PC-9 (cell line): ENCODE measurements at regions of chr22 and their contacts with region 1.

Region 1: GRCh38 chr22:32474635-32475467 is at the start of gene FBXO7:
- DNase-seq: peak; percentile 71 to 90
- H3K4me3 ChIP-seq: peak within 1 kb of the TSS; percentile 77
- H3K27ac ChIP-seq: peak within 1 kb of the TSS; percentile 81
- H3K4me1 ChIP-seq: peaks cover 40% of the 10 kb centered on the region
- H3K27me3 ChIP-seq: no peaks in the 10 kb centered on the region
- CTCF ChIP-seq: peak; percentile 59
- total RNA-seq, gene FBXO7: 76.0 and 81.9 TPM in 2 replicates

Region 2: DNA sequence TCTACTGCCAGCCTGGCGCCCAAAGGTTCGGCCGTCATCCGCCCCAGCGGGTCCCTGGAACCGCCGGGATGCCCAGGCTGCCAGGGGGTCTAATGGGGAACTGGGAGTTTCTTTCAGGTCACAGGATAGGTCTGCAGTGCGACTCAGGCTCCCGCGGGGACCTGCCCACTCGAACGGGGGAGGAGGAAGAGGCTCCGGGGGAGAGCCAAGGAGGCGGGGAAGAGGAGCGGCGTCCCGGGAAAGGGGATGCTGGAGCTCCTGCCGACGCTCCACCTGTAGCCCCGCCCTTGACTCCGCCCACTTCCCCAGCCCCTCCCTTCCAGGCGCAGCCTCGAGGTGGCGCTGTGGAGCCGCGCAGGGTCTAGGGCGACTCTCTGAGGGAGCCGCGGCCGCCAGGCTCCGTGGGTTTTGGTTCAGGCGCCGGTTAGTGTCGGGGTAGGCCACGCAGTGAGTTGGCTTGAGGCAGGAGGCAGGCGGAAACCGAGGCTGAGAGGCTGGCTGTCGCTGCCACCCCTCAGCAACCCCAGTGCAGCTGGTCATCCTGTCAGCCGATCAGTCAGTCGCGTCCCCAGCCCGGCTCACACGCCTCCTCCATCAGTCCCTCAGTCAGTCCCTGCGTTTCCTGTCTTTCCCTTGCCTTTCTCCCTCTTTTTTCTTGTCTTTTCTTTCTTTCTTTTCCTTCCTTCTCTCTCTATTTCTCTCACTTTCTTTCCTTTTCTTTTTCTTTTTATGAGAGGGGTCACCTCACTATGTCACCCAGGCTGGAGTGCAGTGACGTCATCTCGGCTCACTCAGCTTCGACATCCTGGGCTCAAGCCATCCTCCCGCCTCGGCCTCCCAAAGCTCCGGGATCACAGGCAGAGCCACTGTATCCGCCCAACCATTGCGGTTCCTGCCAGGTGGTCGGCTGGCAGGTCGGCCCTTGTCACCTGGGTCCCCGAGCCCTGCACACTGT is 504.1 kb before region 1 on chr22:
- CTCF ChIA-PET with region 1: interaction called, 8 read pairs
- POLR2A ChIA-PET with region 1: no interaction called
- intact Hi-C with region 1: loop called (anchors 1 kb)
- DNase-seq: peak; percentile 68 to 95
- H3K4me3 ChIP-seq: peak overlapping the region; percentile 76
- H3K27ac ChIP-seq: no peak overlapping the region
- H3K4me1 ChIP-seq: no peaks in the 10 kb centered on the region
- H3K27me3 ChIP-seq: no peaks in the 10 kb centered on the region
- CTCF ChIP-seq: peak; percentile 91

Region 3: DNA sequence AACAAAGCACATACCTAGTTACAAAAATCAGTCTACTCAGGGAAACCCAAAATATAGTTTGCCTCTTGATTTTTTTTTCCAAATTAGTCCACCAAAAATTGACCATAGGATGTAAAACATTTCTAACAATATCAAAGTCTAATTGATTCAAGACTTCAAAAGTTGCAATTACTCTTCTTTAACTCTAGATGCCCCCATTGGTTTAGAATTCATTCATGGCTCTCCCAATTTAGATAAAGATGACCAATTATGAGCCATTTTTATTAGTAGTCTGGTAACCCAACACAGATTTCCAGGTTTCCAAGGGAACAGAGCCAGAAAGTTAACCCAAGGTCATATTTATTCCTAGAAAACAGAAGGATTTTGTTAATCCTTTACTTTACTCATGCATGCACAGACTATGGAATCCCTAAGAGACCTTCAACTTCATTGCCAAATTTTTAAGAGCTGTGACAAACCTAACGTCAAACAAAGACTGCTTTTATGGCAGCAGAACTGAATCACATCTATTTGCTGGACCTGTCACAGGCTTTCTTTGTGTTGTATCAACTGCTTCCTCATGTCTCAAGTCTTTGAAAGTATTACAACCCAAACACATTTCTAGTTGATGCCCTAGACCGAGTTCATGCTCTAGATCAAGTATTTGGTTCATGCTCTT is 371.1 kb before region 1 on chr22:
- CTCF ChIA-PET with region 1: no interaction called
- POLR2A ChIA-PET with region 1: no interaction called
- intact Hi-C with region 1: loop called (anchors 10 kb)
- DNase-seq: peak in 1 of 2 experiments; percentile 33
- H3K4me3 ChIP-seq: no peak overlapping the region
- H3K27ac ChIP-seq: no peak overlapping the region
- H3K4me1 ChIP-seq: no peaks in the 10 kb centered on the region
- H3K27me3 ChIP-seq: peaks cover 14% of the 10 kb centered on the region
- CTCF ChIP-seq: peak; percentile 74

Region 4: DNA sequence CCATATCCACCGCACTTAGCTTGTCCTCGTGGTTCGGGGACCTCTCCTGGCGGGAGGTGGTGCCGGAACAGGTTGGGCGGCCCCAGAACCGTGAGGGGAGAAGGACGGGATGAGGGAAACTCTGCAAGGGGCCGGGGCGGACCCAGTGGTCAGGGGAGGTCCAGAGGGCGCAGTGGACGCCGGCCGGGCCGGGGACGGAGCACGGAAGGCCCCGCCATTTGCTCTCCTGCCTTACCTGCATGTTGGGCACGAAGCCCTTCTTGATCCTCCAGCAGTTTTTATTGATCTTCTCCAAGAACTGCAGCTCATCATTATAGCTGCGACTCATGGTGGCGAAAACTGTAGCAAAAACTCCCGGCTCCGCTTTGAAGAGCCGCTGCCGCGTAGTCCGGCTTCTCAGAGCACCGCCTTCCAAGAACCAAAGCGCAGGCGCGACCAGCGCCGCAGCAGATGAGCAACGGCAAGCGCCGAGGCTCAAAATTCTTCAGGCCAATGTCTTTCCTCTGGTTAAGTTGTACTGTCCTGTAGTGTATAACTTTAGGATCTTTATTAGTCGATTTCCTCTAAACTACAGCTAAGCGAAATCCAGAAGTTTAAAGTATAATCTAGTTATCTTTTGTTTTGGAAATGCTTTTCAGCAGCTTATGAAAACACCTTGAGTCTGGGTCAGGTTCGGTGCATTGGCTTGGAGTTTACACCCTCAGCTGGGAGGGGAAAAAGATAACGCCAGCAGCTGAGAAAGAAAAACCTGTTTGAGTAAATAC is 62.8 kb before region 1 on chr22 and contains the start of gene RTCB:
- CTCF ChIA-PET with region 1: interaction called, 3 read pairs
- POLR2A ChIA-PET with region 1: no interaction called
- intact Hi-C with region 1: loop called (anchors 2 kb)
- DNase-seq: peak; percentile 80 to 89
- H3K4me3 ChIP-seq: peak within 1 kb of the TSS; percentile 72
- H3K27ac ChIP-seq: peak within 1 kb of the TSS; percentile 59
- H3K4me1 ChIP-seq: peaks cover 17% of the 10 kb centered on the region
- H3K27me3 ChIP-seq: peaks cover 16% of the 10 kb centered on the region
- CTCF ChIP-seq: no peak
- total RNA-seq, gene RTCB: 75.9 and 76.5 TPM in 2 replicates

Region 5: GRCh38 chr22:32558681-32559355 is 84.0 kb after region 1 on chr22:
- CTCF ChIA-PET with region 1: no interaction called
- POLR2A ChIA-PET with region 1: no interaction called
- intact Hi-C with region 1: no loop called
- DNase-seq: peak; percentile 91 to 94
- H3K4me3 ChIP-seq: no peak overlapping the region
- H3K27ac ChIP-seq: peak overlapping the region; percentile 81
- H3K4me1 ChIP-seq: peaks cover 65% of the 10 kb centered on the region
- H3K27me3 ChIP-seq: no peaks in the 10 kb centered on the region
- CTCF ChIP-seq: no peak

Region 6: GRCh38 chr22:33018232-33018864 is 543.5 kb after region 1 on chr22:
- CTCF ChIA-PET with region 1: no interaction called
- POLR2A ChIA-PET with region 1: interaction called, 12 read pairs
- intact Hi-C with region 1: no loop called
- DNase-seq: peak in 1 of 2 experiments; percentile 50
- H3K4me3 ChIP-seq: no peak overlapping the region
- H3K27ac ChIP-seq: no peak overlapping the region
- H3K4me1 ChIP-seq: no peaks in the 10 kb centered on the region
- H3K27me3 ChIP-seq: peaks cover 47% of the 10 kb centered on the region
- CTCF ChIP-seq: peak; percentile 95